ENCODE measurements at regions of chr20 and their contacts with region 1.

Region 1: DNA sequence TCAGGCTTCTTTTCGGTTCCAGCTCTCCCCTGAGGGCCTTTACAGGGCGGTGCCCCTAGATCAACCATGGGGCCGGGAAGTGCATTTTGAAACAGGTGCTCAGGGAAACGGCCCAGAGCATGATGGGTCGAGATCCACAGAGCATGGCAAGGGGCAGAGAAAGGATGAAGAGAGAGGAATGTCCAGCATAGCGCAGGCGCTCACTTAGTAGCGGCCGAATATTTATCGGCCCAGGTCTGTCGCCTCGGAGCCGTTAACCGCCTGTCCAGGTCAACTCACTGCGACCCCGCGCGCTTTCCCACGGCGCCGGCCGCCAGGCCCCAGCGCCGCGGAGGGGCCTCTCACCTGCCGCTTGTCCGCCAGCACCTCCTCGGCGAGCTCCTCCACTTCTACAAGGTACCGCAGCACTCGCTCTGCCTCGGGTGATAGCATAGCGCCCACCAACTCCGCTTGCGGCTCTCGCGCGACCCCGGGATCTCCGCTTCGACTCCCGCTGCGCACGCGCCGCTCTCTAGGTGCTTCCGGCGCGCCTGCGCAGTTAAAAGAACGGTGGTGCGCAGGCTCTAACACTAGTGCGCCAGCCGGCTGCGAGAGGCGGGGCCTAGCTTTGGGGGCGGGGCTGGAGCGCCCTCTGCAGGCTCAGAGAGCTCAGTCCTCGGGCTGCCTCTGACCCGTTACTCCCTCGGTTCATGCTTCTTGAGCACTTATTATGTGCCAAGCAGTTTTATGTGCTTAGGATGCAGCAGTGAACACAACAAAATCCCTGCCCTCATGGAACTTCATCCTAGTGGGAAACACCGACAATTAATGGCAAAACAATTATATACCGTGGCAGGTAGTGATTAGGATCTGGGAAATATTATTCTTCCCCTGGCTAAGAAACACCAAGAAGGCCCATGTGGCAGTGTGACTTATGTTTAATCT is at the start of gene PDRG1:
- DNase-seq: peak; percentile 93
- H3K4me3 ChIP-seq: peak within 1 kb of the TSS; percentile 93
- H3K27ac ChIP-seq: peak within 1 kb of the TSS; percentile 21
- H3K27me3 ChIP-seq: peaks cover 12% of the 10 kb centered on the region
- CTCF ChIP-seq: peak; percentile 90
- polyA plus RNA-seq, gene PDRG1: 13.1 and 13.2 TPM in 2 replicates

Region 2: DNA sequence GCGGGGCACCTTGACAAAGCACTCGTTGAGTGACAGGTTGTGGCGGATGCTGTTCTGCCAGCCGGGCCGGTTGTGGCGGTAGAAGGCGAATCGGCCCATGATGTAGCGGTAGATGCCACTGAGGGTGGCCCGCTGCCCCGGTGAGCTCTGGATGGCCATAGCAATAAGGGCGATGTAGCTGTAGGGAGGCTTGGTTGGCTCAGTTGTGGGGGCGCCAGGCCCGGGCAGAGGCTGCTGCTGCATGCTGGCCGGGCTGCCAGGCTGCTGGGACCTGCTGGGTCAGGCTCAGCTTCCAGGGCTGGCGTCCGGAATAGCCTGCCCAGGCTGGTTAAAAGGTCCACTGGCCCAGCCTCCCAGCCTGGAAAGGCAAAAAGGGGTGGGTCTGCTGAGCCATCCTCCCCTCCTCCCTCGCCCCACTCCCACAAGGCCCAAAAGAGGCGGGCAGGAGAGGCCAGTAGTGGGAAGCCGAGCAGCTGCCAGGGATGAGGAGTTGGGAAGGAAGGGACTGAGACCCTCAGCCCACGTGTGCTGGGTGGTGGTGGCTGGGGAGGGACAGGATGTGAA is 106.4 kb before region 1 on chr20 and contains the start of gene FOXS1:
- CTCF ChIA-PET with region 1: interaction called, 79 read pairs
- POLR2A ChIA-PET with region 1: no interaction called
- DNase-seq: no peak
- H3K4me3 ChIP-seq: no peak within 1 kb of the TSS
- H3K27ac ChIP-seq: no peak within 1 kb of the TSS
- H3K27me3 ChIP-seq: peaks cover 33% of the 10 kb centered on the region
- CTCF ChIP-seq: no peak
- polyA plus RNA-seq, gene FOXS1: not detected in 2 replicates

Region 3: GRCh38 chr20:31856516-31856915 is 95.3 kb before region 1 on chr20:
- CTCF ChIA-PET with region 1: interaction called, 79 read pairs
- POLR2A ChIA-PET with region 1: no interaction called
- DNase-seq: no peak
- H3K4me3 ChIP-seq: no peak overlapping the region
- H3K27ac ChIP-seq: no peak overlapping the region
- H3K27me3 ChIP-seq: peaks cover 52% of the 10 kb centered on the region
- CTCF ChIP-seq: no peak

Region 4: GRCh38 chr20:31920102-31920855 is 31.5 kb before region 1 on chr20:
- CTCF ChIA-PET with region 1: interaction called, 11 read pairs
- POLR2A ChIA-PET with region 1: no interaction called
- DNase-seq: no peak
- H3K4me3 ChIP-seq: no peak overlapping the region
- H3K27ac ChIP-seq: no peak overlapping the region
- H3K27me3 ChIP-seq: peaks cover 36% of the 10 kb centered on the region
- CTCF ChIP-seq: no peak

Region 5: DNA sequence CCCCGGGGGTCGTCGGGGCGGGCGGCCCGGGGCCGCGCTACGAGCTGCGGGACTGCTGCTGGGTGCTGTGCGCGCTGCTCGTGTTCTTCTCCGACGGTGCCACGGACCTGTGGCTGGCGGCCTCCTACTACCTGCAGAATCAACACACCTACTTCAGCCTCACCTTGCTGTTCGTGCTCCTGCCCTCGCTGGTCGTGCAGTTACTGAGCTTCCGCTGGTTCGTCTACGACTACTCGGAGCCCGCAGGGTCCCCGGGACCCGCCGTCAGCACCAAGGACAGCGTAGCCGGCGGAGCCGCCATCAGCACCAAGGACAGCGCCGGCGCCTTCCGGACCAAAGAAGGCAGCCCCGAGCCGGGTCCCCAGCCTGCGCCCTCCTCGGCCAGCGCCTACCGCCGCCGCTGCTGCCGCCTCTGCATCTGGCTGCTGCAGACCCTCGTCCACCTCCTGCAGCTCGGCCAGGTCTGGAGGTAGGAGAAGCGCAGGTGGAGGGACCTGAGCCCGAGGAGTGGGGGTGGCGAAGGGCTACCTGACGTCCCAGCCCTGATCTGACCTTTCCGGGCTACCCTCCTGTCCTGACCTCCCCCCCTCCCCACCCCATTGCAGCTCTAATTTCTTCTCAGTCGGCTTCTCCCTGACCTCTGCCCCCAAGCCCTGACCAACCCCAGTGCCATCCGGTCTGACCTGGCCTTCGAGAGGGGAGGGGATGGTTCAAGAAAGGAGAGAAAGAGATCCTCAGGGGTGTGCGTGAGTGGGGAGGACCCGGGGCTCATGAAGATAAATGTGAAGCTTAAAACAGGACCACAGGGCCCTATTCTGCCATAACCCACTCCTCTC is 16.7 kb after region 1 on chr20:
- CTCF ChIA-PET with region 1: interaction called, 17 read pairs
- POLR2A ChIA-PET with region 1: no interaction called
- DNase-seq: peak; percentile 23
- H3K4me3 ChIP-seq: no peak overlapping the region
- H3K27ac ChIP-seq: no peak overlapping the region
- H3K27me3 ChIP-seq: peaks cover 28% of the 10 kb centered on the region
- CTCF ChIP-seq: no peak

Region 6: DNA sequence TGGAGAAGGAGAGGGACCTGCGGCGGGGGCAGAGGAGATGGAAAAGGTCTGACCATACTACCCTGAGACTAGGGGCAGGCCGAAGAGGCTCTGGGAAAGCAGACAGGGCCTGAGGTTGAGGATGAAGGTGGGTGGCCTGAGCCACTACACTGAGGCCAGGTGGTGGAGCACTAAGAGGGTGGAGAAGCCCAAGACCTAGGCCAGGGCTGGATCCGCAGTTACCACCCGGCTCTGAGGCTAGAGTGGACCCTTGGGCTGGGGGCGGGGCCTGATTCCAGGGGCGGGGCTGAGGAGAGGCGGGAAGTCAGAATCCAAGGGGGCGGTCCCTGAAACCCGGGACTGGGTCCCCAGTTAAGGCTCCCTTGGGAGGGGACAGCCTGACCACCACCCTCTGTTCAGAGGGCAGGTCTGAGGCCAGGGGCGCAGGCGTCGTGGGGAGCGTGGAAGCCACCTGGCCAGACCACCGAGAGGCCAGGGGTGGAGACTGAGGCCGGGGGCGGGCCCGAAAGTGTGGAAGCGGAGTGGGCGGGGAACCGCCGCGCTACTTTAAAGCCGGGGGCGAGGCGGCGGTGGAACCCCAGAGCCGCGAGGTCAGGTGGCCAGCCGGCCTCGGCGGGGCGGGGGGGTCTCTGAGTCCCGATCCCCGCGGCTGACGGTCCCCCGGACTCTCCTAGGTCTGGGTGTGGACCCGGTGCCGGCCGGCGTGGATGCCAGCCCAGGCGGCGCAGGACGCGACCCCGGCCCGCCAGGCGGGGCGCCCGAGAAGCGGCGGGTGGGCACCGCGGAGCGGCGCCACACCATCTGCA is 66.7 kb after region 1 on chr20:
- CTCF ChIA-PET with region 1: no interaction called
- POLR2A ChIA-PET with region 1: no interaction called
- DNase-seq: no peak
- H3K4me3 ChIP-seq: peak overlapping the region; percentile 36; the same call in 1 of the 2 replicates
- H3K27ac ChIP-seq: no peak overlapping the region
- H3K27me3 ChIP-seq: peaks cover 56% of the 10 kb centered on the region
- CTCF ChIP-seq: no peak